Spleen (tissue), 13 donors: ENCODE measurements at regions of chr11 and their contacts with region 1.

Region 1: GRCh38 chr11:129331871-129332274 is 43.8 kb upstream of the BARX2 start:
- DNase-seq: peak; percentile 88
- H3K4me3 ChIP-seq: peak overlapping the region in 1 of 8 donors; percentile 24
- H3K27ac ChIP-seq: no peak overlapping the region
- H3K4me1 ChIP-seq: peaks cover 0 to 7% (median 5%) of the 10 kb centered on the region in 6 donors
- H3K27me3 ChIP-seq: no peaks in the 10 kb centered on the region
- CTCF ChIP-seq: peak; percentile 41 to 81 (median 71)
- POLR2A ChIP-seq: no peak

Region 2: GRCh38 chr11:129117595-129118350 is 214.1 kb before region 1 on chr11:
- intact Hi-C with region 1: loop called (anchors 5 kb)
- DNase-seq: no peak
- H3K4me3 ChIP-seq: no peak overlapping the region
- H3K27ac ChIP-seq: no peak overlapping the region
- H3K4me1 ChIP-seq: peaks cover 0 to 6% (median 0%) of the 10 kb centered on the region in 6 donors
- H3K27me3 ChIP-seq: no peaks in the 10 kb centered on the region
- CTCF ChIP-seq: peak; percentile 25 to 80 (median 72)
- POLR2A ChIP-seq: no peak